ENCODE measurements at regions of chr3 and their contacts with region 1.

Region 1: DNA sequence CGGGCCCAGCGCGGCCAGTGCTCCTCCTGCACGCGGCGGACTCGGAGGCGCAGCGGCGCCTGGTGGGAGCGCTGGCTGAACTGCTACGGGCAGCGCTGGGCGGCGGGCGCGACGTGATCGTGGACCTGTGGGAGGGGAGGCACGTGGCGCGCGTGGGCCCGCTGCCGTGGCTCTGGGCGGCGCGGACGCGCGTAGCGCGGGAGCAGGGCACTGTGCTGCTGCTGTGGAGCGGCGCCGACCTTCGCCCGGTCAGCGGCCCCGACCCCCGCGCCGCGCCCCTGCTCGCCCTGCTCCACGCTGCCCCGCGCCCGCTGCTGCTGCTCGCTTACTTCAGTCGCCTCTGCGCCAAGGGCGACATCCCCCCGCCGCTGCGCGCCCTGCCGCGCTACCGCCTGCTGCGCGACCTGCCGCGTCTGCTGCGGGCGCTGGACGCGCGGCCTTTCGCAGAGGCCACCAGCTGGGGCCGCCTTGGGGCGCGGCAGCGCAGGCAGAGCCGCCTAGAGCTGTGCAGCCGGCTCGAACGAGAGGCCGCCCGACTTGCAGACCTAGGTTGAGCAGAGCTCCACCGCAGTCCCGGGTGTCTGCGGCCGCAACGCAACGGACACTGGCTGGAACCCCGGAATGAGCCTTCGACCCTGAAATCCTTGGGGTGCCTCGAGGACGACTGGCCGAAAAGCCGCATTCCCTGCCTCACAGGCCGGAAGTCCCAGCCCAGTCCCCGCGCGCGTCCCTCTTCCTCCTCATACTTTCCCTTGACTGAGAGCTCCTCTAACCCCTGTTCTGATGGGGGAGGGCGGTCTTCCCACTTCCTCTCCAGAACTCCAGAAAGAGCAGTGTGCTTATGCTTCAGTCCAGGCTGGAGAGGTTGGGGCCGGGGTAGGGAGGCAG is 1.4 kb upstream of the IL17RC start:
- DNase-seq: no peak
- H3K4me3 Mint-ChIP-seq: no peak overlapping the region
- H3K27ac Mint-ChIP-seq: no peak overlapping the region
- H3K4me1 Mint-ChIP-seq: peaks cover 21% of the 10 kb centered on the region
- H3K27me3 Mint-ChIP-seq: no peaks in the 10 kb centered on the region
- CTCF ChIP-seq: no peak

Region 2: DNA sequence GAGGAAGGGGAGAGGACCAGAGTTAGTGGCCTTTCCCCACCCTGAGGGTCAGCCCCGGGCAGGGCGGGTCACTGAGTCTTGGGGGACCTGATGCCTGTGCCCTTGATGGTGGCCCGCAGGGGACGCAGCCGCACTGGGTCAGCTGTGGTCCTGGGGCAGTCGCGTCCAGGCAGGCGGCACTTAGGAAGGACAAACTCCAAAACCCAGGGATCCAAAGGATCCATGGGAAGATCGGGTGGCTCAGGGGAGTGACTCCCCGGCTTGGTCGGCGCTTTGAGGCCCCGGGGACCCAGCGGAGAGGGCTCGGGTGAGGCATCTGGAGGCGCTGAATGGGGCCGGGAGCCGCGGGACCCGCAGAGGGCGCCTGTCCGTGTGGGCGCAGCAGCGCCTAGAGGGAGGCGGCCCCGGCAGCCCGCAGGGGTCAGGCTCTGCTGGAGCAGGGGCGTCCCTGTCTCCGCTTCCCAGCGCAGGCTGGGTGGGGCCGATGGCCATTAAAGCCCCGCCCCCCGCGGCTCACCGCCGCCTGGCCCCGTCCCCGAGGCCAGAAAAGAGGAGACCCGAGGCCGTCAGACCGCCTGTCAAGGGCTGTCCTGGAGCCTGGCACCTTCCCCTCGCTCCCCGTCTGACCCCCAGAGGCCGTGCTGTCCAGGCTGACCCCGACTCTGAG is 53.0 kb before region 1 on chr3:
- CTCF ChIA-PET with region 1: interaction called, 3 read pairs
- POLR2A ChIA-PET with region 1: interaction called, 17 read pairs
- intact Hi-C with region 1: no loop called
- DNase-seq: no peak
- H3K4me3 Mint-ChIP-seq: no peak overlapping the region
- H3K27ac Mint-ChIP-seq: peak overlapping the region; percentile 59
- H3K4me1 Mint-ChIP-seq: peaks cover 16% of the 10 kb centered on the region
- H3K27me3 Mint-ChIP-seq: no peaks in the 10 kb centered on the region
- CTCF ChIP-seq: no peak

Region 3: DNA sequence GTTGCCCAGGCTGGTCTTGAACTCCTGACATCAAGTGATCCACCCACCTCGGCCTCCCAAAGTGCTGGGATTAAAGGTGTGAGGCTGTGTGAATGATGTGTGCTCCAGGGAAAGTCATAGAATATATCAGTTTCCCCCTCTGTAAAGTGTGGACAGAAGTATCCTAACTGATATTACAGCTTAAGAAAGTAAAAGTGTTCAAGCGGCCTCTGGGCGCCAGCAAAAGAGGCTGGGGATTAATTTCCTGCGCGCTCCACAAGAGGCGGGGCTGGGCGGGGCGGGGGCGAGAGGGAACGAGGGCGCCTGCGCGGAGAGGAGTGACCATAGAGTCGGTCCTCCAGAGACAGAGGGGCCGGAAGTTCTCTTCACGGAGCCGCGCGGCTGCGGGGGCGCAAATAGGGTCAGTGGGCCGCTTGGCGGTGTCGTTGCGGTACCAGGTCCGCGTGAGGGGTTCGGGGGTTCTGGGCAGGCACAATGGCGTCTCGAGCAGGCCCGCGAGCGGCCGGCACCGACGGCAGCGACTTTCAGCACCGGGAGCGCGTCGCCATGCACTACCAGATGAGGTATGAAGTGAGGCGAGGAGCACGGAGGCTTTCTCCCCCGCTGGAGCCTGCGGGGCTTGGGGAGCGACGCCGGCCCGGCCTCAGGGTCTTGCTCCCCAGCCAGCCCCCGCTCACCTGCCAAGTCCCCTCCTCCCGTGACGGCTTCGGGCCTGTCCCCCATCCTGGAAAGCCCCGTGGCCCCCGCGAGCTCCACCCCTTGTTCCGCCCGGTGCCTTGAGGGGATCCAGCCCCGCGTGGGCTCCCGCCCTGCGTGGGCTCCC is 25.0 kb before region 1 on chr3 and contains the start of gene JAGN1:
- CTCF ChIA-PET with region 1: interaction called, 16 read pairs
- POLR2A ChIA-PET with region 1: interaction called, 47 read pairs
- intact Hi-C with region 1: no loop called
- DNase-seq: peak; percentile 90
- H3K4me3 Mint-ChIP-seq: peak within 1 kb of the TSS; percentile 91
- H3K27ac Mint-ChIP-seq: peak within 1 kb of the TSS; percentile 98
- H3K4me1 Mint-ChIP-seq: peaks cover 45% of the 10 kb centered on the region
- H3K27me3 Mint-ChIP-seq: no peaks in the 10 kb centered on the region
- CTCF ChIP-seq: no peak
- total RNA-seq, gene JAGN1: 49.7 and 55.4 TPM in 2 replicates

Region 4: GRCh38 chr3:9897408-9898372 is 17.8 kb before region 1 on chr3:
- CTCF ChIA-PET with region 1: interaction called, 11 read pairs
- POLR2A ChIA-PET with region 1: interaction called, 98 read pairs
- intact Hi-C with region 1: no loop called
- DNase-seq: peak; percentile 96
- H3K4me3 Mint-ChIP-seq: peak overlapping the region; percentile 33
- H3K27ac Mint-ChIP-seq: peak overlapping the region; percentile 79
- H3K4me1 Mint-ChIP-seq: peaks cover 59% of the 10 kb centered on the region
- H3K27me3 Mint-ChIP-seq: no peaks in the 10 kb centered on the region
- CTCF ChIP-seq: no peak

Region 5: DNA sequence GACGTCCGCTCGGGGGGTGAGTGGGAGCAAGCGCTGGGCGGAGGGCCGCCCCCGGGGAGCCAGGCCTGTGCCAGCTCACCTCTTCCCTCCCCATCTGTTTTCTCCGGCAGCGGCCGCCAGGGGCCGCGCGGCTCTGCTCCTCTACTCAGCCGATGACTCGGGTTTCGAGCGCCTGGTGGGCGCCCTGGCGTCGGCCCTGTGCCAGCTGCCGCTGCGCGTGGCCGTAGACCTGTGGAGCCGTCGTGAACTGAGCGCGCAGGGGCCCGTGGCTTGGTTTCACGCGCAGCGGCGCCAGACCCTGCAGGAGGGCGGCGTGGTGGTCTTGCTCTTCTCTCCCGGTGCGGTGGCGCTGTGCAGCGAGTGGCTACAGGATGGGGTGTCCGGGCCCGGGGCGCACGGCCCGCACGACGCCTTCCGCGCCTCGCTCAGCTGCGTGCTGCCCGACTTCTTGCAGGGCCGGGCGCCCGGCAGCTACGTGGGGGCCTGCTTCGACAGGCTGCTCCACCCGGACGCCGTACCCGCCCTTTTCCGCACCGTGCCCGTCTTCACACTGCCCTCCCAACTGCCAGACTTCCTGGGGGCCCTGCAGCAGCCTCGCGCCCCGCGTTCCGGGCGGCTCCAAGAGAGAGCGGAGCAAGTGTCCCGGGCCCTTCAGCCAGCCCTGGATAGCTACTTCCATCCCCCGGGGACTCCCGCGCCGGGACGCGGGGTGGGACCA is 17.5 kb after region 1 on chr3:
- CTCF ChIA-PET with region 1: interaction called, 10 read pairs
- POLR2A ChIA-PET with region 1: interaction called, 49 read pairs
- intact Hi-C with region 1: no loop called
- DNase-seq: peak; percentile 77
- H3K4me3 Mint-ChIP-seq: peak overlapping the region; percentile 90
- H3K27ac Mint-ChIP-seq: peak overlapping the region; percentile 86
- H3K4me1 Mint-ChIP-seq: peaks cover 23% of the 10 kb centered on the region
- H3K27me3 Mint-ChIP-seq: no peaks in the 10 kb centered on the region
- CTCF ChIP-seq: peak; percentile 59

Region 6: DNA sequence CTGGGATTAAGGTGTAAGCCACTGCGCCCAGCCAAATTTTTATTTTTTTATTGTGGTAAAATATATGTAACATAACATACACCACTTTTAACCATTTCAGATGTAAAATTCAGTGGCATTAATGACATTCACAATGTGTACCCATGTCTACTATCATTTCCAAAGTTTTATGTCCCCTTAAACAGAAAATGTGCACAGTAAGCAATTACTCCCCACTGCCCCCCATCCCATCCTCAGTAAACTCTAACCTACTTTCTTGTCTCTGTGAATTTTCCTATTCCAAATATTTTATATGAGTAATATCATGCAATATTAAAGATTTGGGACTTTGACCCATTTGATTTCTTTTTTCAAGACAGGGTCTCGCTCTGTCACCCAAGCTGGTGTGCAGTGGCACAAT is 51.3 kb after region 1 on chr3:
- CTCF ChIA-PET with region 1: no interaction called
- POLR2A ChIA-PET with region 1: no interaction called
- intact Hi-C with region 1: no loop called
- DNase-seq: no peak
- H3K4me3 Mint-ChIP-seq: no peak overlapping the region
- H3K27ac Mint-ChIP-seq: no peak overlapping the region
- H3K4me1 Mint-ChIP-seq: peaks cover 10% of the 10 kb centered on the region
- H3K27me3 Mint-ChIP-seq: no peaks in the 10 kb centered on the region
- CTCF ChIP-seq: no peak